Esophagus muscularis mucosa (tissue), 4 donors: ENCODE measurements at regions of chr7 and their contacts with region 1.

Region 1: GRCh38 chr7:36291387-36292316 is 98.0 kb upstream of the ANLN start:
- DNase-seq: peak; percentile 96
- H3K4me3 ChIP-seq: peak overlapping the region; percentile 40 to 57 (median 43)
- H3K27ac ChIP-seq: peak overlapping the region; percentile 80 to 93 (median 88)
- H3K4me1 ChIP-seq: peaks cover 13 to 52% (median 40%) of the 10 kb centered on the region in 4 donors
- H3K27me3 ChIP-seq: no peaks in the 10 kb centered on the region
- CTCF ChIP-seq: peak; percentile 94 to 97 (median 97)
- EP300 ChIP-seq: no peak
- POLR2A ChIP-seq: no peak

Region 2: DNA sequence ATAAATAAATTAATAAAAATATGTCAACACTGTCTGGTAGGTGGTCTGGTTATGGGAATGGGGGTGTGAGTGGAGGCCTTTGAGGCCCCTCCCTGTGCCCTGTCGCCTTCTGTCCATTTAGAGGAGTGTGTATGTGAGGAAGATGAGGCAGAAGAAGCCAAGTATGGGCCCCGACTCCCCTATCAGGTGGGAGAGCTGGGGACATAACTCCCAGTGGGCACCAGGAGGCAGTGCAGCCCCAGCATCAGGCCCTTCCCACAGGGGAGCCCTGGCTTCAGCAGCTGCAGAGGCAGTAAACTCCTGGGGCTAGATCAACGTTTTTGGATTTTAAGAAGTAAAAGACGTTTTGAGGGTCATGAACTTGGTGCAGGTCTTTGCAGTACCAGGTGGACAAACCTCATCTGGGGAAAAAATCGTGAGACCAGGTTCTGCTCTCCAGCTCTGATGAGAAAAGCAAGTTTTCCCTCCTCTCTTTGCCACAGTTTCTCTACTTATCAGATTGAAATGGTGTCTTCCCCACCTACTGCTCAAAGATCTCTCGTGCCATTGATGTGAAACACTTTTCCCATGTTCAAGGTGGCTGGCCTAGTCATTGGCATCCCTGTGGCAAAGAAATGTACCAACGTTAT is 306.4 kb before region 1 on chr7:
- intact Hi-C with region 1: loop called (anchors 1 kb)
- DNase-seq: no peak
- H3K4me3 ChIP-seq: no peak overlapping the region
- H3K27ac ChIP-seq: no peak overlapping the region
- H3K4me1 ChIP-seq: peaks cover 0 to 35% (median 24%) of the 10 kb centered on the region in 4 donors
- H3K27me3 ChIP-seq: no peaks in the 10 kb centered on the region
- CTCF ChIP-seq: peak; percentile 92 to 96 (median 94)
- EP300 ChIP-seq: no peak
- POLR2A ChIP-seq: no peak

Region 3: GRCh38 chr7:36084475-36085097 is 207.1 kb before region 1 on chr7:
- intact Hi-C with region 1: loop called (anchors 5 kb)
- DNase-seq: no peak
- H3K4me3 ChIP-seq: no peak overlapping the region
- H3K27ac ChIP-seq: no peak overlapping the region
- H3K4me1 ChIP-seq: peaks cover 0 to 6% (median 2%) of the 10 kb centered on the region in 4 donors
- H3K27me3 ChIP-seq: no peaks in the 10 kb centered on the region
- CTCF ChIP-seq: peak; percentile 53 to 68 (median 65)
- EP300 ChIP-seq: no peak
- POLR2A ChIP-seq: no peak

Region 4: GRCh38 chr7:36152756-36153570 is 138.7 kb before region 1 on chr7 and contains the start of gene EEPD1:
- intact Hi-C with region 1: loop called (anchors 2 kb)
- DNase-seq: peak; percentile 100
- H3K4me3 ChIP-seq: peak within 1 kb of the TSS; percentile 73 to 92 (median 80)
- H3K27ac ChIP-seq: peak within 1 kb of the TSS; percentile 93 to 97 (median 95)
- H3K4me1 ChIP-seq: peaks cover 38 to 54% (median 49%) of the 10 kb centered on the region in 4 donors
- H3K27me3 ChIP-seq: no peaks in the 10 kb centered on the region
- CTCF ChIP-seq: peak in 1 of 3 experiments; percentile 7
- EP300 ChIP-seq: no peak
- POLR2A ChIP-seq: peak; percentile 59
- total RNA-seq, gene EEPD1: 18.7 to 27.9 (median 26.6) TPM

Region 5: GRCh38 chr7:36207451-36208291 is 84.0 kb before region 1 on chr7:
- intact Hi-C with region 1: loop called (anchors 5 kb)
- DNase-seq: no peak
- H3K4me3 ChIP-seq: no peak overlapping the region
- H3K27ac ChIP-seq: peak overlapping the region; percentile 82 to 87 (median 84)
- H3K4me1 ChIP-seq: peaks cover 65 to 99% (median 94%) of the 10 kb centered on the region in 4 donors
- H3K27me3 ChIP-seq: no peaks in the 10 kb centered on the region
- CTCF ChIP-seq: peak in 1 of 3 experiments; percentile 29
- EP300 ChIP-seq: peak; percentile 76
- POLR2A ChIP-seq: no peak

Region 6: DNA sequence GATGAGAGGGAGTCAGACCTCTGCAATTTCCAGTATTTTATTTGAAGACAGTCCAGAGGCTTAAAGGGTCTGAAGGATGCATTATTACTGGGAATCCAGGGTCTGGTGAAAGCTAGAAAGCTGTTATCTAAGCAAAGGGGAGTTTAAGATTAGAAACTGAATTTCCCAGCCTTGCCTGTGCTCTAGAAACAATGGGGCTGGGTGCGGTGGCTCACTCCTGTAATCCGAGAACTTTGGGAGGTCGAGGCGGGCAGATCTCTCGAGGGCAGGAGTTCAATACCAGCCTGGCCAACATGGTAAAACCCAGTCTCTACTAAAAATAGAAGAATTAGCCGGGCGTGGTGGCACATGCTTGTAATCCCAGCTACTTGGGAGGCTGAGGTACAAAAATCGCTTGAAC is 26.5 kb after region 1 on chr7:
- intact Hi-C with region 1: loop called (anchors 2 kb)
- DNase-seq: no peak
- H3K4me3 ChIP-seq: no peak overlapping the region
- H3K27ac ChIP-seq: no peak overlapping the region
- H3K4me1 ChIP-seq: peaks cover 0 to 6% (median 0%) of the 10 kb centered on the region in 4 donors
- H3K27me3 ChIP-seq: no peaks in the 10 kb centered on the region
- CTCF ChIP-seq: no peak
- EP300 ChIP-seq: no peak
- POLR2A ChIP-seq: no peak